Activated naive CD8-positive, alpha-beta T cell treated with anti-CD3 and anti-CD28 coated beads, Interleukin-2, amount 10 ng/mL, durations not matched to agents 7 days and 5 days (primary cell): ENCODE measurements at regions of chr12 and their contacts with region 1.

Region 1: GRCh38 chr12:92145731-92146496 is at the start of gene BTG1:
- DNase-seq: peak; percentile 95
- ATAC-seq: peak; percentile 77
- H3K4me3 Mint-ChIP-seq: peak within 1 kb of the TSS; percentile 88
- H3K27ac Mint-ChIP-seq: peak within 1 kb of the TSS; percentile 99
- H3K4me1 Mint-ChIP-seq: peaks cover 27% of the 10 kb centered on the region
- H3K27me3 Mint-ChIP-seq: no peaks in the 10 kb centered on the region
- total RNA-seq, gene BTG1: 249 to 255 TPM

Region 2: GRCh38 chr12:92034858-92035401 is 111.0 kb before region 1 on chr12:
- POLR2A ChIA-PET with region 1: interaction called, 51 read pairs
- DNase-seq: peak; percentile 51
- ATAC-seq: peak; percentile 32
- H3K4me3 Mint-ChIP-seq: peak overlapping the region; percentile 95
- H3K27ac Mint-ChIP-seq: peak overlapping the region; percentile 92
- H3K4me1 Mint-ChIP-seq: peaks cover 68% of the 10 kb centered on the region
- H3K27me3 Mint-ChIP-seq: no peaks in the 10 kb centered on the region

Region 3: GRCh38 chr12:92123780-92124688 is 21.9 kb before region 1 on chr12:
- POLR2A ChIA-PET with region 1: interaction called, 311 read pairs
- DNase-seq: no peak
- ATAC-seq: no peak
- H3K4me3 Mint-ChIP-seq: peak overlapping the region; percentile 53
- H3K27ac Mint-ChIP-seq: peak overlapping the region; percentile 28
- H3K4me1 Mint-ChIP-seq: peaks cover 39% of the 10 kb centered on the region
- H3K27me3 Mint-ChIP-seq: no peaks in the 10 kb centered on the region

Region 4: DNA sequence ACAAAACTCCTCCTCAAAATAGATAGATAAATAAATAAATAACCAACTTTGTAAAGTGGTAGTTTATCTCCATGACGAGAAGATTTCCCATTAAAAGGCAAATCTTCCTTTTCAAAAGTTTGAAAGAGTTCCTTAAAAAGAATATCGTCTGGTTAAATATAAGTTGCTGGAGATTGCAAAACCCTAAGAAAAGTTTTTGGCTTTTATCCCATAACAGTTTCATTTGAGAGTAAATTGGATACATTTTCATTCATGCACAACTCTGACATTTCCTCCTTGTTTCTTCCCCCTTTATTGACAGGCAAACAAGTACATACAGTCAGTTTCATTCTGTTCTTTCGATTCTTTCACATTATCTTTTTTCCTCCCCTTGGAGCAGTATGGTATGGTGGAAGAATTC is 45.1 kb after region 1 on chr12:
- POLR2A ChIA-PET with region 1: interaction called, 56 read pairs
- DNase-seq: no peak
- ATAC-seq: no peak
- H3K4me3 Mint-ChIP-seq: no peak overlapping the region
- H3K27ac Mint-ChIP-seq: no peak overlapping the region
- H3K4me1 Mint-ChIP-seq: peaks cover 29% of the 10 kb centered on the region
- H3K27me3 Mint-ChIP-seq: no peaks in the 10 kb centered on the region

Region 5: GRCh38 chr12:92224685-92225331 is 78.9 kb after region 1 on chr12:
- POLR2A ChIA-PET with region 1: no interaction called
- DNase-seq: no peak
- ATAC-seq: no peak
- H3K4me3 Mint-ChIP-seq: no peak overlapping the region
- H3K27ac Mint-ChIP-seq: no peak overlapping the region
- H3K4me1 Mint-ChIP-seq: peaks cover 2% of the 10 kb centered on the region
- H3K27me3 Mint-ChIP-seq: no peaks in the 10 kb centered on the region

Region 6: GRCh38 chr12:92378682-92379479 is 233.0 kb after region 1 on chr12:
- POLR2A ChIA-PET with region 1: interaction called, 26 read pairs
- DNase-seq: no peak
- ATAC-seq: peak; percentile 90
- H3K4me3 Mint-ChIP-seq: peak overlapping the region; percentile 43
- H3K27ac Mint-ChIP-seq: peak overlapping the region; percentile 85
- H3K4me1 Mint-ChIP-seq: peaks cover 28% of the 10 kb centered on the region
- H3K27me3 Mint-ChIP-seq: no peaks in the 10 kb centered on the region

Region 7: DNA sequence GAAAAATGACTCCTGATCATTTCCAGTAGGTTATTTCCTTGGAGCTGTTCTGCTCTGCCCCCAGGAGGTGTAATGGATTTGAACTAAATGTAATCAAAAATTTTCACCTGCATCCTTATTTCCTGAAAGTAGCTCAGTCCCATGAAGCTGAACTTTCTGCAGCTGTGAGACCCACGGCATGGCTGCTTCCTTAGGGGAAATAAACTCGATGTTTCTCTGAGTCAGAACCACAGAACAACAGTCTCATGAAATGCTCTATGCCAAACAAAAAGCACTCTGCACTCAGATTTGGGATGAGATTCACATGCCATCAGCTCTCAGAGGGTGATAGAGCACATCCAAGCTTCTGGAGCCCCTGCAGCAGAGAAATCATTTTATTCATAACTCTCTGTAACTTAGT is 332.8 kb after region 1 on chr12:
- POLR2A ChIA-PET with region 1: no interaction called
- DNase-seq: no peak
- ATAC-seq: no peak
- H3K4me3 Mint-ChIP-seq: no peak overlapping the region
- H3K27ac Mint-ChIP-seq: no peak overlapping the region
- H3K4me1 Mint-ChIP-seq: no peaks in the 10 kb centered on the region
- H3K27me3 Mint-ChIP-seq: no peaks in the 10 kb centered on the region

Region 8: GRCh38 chr12:92570056-92570753 is 424.3 kb after region 1 on chr12:
- POLR2A ChIA-PET with region 1: interaction called, 36 read pairs
- DNase-seq: no peak
- ATAC-seq: peak; percentile 88
- H3K4me3 Mint-ChIP-seq: no peak overlapping the region
- H3K27ac Mint-ChIP-seq: no peak overlapping the region
- H3K4me1 Mint-ChIP-seq: peaks cover 11% of the 10 kb centered on the region
- H3K27me3 Mint-ChIP-seq: no peaks in the 10 kb centered on the region